ENCODE measurements at regions of chr19 and their contacts with region 1.

Region 1: GRCh38 chr19:55503502-55504251 is 15.4 kb downstream of the SSC5D start:
- DNase-seq: peak; percentile 80
- ATAC-seq: peak; percentile 99
- H3K4me3 ChIP-seq: peak overlapping the region; percentile 43; the same call in 1 of the 2 replicates
- H3K27ac ChIP-seq: peak overlapping the region; percentile 80
- H3K4me1 ChIP-seq: peaks cover 5% of the 10 kb centered on the region
- H3K27me3 ChIP-seq: no peaks in the 10 kb centered on the region
- CTCF ChIP-seq: peak; percentile 94 to 99 (median 95)
- EP300 ChIP-seq: no peak
- POLR2A ChIP-seq: peak; percentile 50; the same call in 1 of the 2 replicates
- RAD21 ChIP-seq: peak; percentile 90

Region 2: DNA sequence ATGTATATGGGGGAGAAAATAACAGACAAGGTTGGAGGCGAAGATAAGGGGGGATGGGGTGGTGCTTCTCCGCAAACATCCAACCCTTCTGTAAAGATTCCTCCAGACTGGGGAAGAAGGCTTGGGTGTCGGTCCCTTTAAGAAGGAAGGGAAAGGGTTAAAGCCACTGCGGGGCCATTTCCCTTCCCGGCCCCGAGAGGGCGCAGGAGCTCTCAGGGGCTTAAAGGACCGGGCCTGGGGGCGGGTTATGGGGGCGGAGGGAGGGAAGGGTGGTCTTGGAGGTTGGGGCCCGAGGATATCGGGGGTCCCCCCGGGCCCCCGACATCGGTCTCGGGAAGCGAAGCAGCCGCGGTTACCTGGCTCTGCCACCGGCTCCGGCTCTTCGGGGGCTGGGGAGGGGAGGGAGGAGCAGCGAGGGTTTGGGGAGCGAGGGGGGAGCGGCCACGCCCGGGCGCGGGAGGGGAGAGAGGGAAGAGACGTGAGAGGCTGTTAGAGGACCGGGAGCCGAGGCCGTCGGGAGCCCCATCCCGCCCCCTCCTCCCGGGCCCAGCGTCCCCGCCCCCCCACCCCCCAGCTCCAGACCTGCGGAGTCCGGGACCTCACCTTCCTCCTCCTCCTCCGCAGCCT is 357.5 kb before region 1 on chr19:
- CTCF ChIA-PET with region 1: interaction called, 17 read pairs
- POLR2A ChIA-PET with region 1: no interaction called
- RAD21 ChIA-PET with region 1: interaction called, 25 read pairs
- SMC1A ChIA-PET with region 1: no interaction called
- in situ Hi-C with region 1: no loop called
- intact Hi-C with region 1: loop called (anchors 2 kb)
- DNase-seq: no peak
- ATAC-seq: peak; percentile 68
- H3K4me3 ChIP-seq: no peak overlapping the region
- H3K27ac ChIP-seq: no peak overlapping the region
- H3K4me1 ChIP-seq: no peaks in the 10 kb centered on the region
- H3K27me3 ChIP-seq: no peaks in the 10 kb centered on the region; a peak in 2 of 4 replicates
- CTCF ChIP-seq: peak; percentile 37 to 70 (median 45)
- EP300 ChIP-seq: no peak
- POLR2A ChIP-seq: no peak
- RAD21 ChIP-seq: peak; percentile 38; the same call in 1 of the 2 replicates

Region 3: GRCh38 chr19:55301459-55302317 is 202.0 kb before region 1 on chr19:
- CTCF ChIA-PET with region 1: interaction called, 20 read pairs
- POLR2A ChIA-PET with region 1: no interaction called
- RAD21 ChIA-PET with region 1: interaction called, 9 read pairs
- SMC1A ChIA-PET with region 1: no interaction called
- in situ Hi-C with region 1: no loop called
- intact Hi-C with region 1: no loop called
- DNase-seq: peak; percentile 59
- ATAC-seq: peak; percentile 93
- H3K4me3 ChIP-seq: peak overlapping the region; percentile 67; the same call in 1 of the 2 replicates
- H3K27ac ChIP-seq: peak overlapping the region; percentile 27
- H3K4me1 ChIP-seq: peaks cover 11% of the 10 kb centered on the region
- H3K27me3 ChIP-seq: no peaks in the 10 kb centered on the region
- CTCF ChIP-seq: peak; percentile 91 to 97 (median 95)
- EP300 ChIP-seq: no peak
- POLR2A ChIP-seq: peak; percentile 37; the same call in 1 of the 2 replicates
- RAD21 ChIP-seq: peak; percentile 49

Region 4: DNA sequence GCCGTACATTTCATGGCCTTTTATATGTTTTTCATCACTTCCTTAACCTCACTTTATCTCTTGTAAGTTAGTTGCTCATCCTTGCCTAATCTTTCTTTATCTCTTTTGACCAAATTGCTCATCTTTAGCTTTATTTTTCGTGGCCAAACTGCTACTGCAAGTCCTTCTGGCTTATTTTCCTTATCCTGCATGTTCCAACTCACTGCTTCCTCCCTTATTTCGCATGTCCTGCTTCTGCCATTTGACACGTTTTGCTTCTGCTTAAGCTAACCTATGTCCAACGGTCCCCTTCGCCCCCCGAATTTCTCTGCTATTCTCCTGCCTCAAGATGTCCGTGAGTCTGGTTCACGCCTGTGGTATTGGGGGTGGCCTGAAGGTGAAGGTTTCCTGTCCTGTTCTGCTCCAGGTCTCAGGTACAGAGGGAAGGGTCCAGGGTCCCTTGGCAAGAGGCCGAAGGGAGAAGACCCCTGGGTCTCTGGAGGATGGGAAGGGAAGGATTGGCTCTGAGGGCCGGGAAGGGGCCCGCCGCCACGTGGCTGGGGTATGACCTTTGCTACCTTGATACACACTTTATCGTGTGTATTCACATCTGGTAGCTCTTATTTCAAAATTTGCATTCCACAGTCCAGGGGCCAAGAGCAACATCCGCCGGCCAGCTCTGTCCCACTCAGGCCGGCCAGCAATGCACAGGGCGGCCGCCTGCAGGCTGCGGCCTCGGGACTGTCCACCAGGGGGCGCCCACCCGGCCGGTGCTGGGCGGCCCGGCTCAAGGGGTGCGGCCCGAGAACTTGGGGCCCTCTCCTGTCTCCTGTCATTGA is 36.2 kb before region 1 on chr19:
- CTCF ChIA-PET with region 1: interaction called, 88 read pairs
- POLR2A ChIA-PET with region 1: no interaction called
- RAD21 ChIA-PET with region 1: interaction called, 34 read pairs
- SMC1A ChIA-PET with region 1: interaction called, 19 read pairs
- in situ Hi-C with region 1: no loop called
- intact Hi-C with region 1: loop called (anchors 1 kb)
- DNase-seq: no peak
- ATAC-seq: peak; percentile 99
- H3K4me3 ChIP-seq: no peak overlapping the region
- H3K27ac ChIP-seq: no peak overlapping the region
- H3K4me1 ChIP-seq: no peaks in the 10 kb centered on the region
- H3K27me3 ChIP-seq: no peaks in the 10 kb centered on the region
- CTCF ChIP-seq: peak; percentile 84 to 94 (median 91)
- EP300 ChIP-seq: no peak
- POLR2A ChIP-seq: no peak
- RAD21 ChIP-seq: peak; percentile 63

Region 5: DNA sequence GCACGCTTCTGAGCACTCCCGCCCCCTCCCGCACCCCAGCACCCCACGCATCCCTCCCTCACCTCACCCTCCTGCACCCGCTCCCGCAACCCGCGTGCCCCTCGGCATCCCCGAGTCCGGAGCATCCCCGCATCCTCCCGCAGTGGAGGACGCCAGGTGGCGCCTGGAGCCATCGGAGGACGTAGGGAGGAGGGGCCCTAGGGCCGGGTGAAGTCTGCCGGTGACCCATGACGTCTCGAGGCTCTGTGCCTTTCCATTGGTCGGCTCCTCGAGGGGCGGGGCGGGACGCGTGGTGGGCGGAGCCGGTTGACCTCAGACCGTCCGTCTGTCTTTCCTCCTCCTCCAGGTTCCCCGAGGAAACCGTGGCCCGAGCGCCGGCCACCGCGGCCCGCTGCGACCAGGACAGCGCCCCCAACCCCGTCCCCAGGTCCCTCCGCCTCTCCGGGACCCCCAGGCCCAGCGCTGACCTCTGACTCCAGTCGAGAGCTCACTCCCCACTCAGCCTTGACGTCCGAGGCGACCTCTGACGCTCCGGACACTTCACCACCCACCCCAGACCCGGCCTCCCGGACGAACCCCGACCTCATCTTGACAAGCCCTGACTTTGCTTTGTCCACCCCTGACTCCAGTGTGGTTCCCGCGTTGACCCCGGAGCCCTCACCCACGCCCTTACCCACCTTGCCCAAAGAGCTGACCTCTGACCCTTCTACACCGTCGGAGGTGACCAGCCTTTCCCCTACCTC is 13.4 kb after region 1 on chr19:
- CTCF ChIA-PET with region 1: interaction called, 45 read pairs
- POLR2A ChIA-PET with region 1: no interaction called
- RAD21 ChIA-PET with region 1: no interaction called
- SMC1A ChIA-PET with region 1: interaction called, 4 read pairs
- in situ Hi-C with region 1: no loop called
- intact Hi-C with region 1: no loop called
- DNase-seq: peak; percentile 66
- ATAC-seq: peak; percentile 100
- H3K4me3 ChIP-seq: peak overlapping the region; percentile 66; the same call in 1 of the 2 replicates
- H3K27ac ChIP-seq: peak overlapping the region; percentile 62
- H3K4me1 ChIP-seq: 0 out of 2 replicates have a peak, but pooled peaks cover 4% of the 10 kb centered on the region
- H3K27me3 ChIP-seq: no peaks in the 10 kb centered on the region
- CTCF ChIP-seq: peak; percentile 80 to 97 (median 96); a peak in 5 of 6 replicates
- EP300 ChIP-seq: peak in 1 of 2 experiments; percentile 16; a peak in 1 of 4 replicates
- POLR2A ChIP-seq: peak; percentile 53; the same call in 1 of the 2 replicates
- RAD21 ChIP-seq: peak; percentile 96

Region 6: GRCh38 chr19:55624109-55625003 is 120.7 kb after region 1 on chr19 and contains the start of gene ZNF784:
- CTCF ChIA-PET with region 1: interaction called, 13 read pairs
- POLR2A ChIA-PET with region 1: interaction called, 3 read pairs
- RAD21 ChIA-PET with region 1: interaction called, 8 read pairs
- SMC1A ChIA-PET with region 1: interaction called, 3 read pairs
- in situ Hi-C with region 1: no loop called
- intact Hi-C with region 1: no loop called
- DNase-seq: no peak
- ATAC-seq: peak; percentile 86
- H3K4me3 ChIP-seq: peak within 1 kb of the TSS; percentile 72; the same call in 1 of the 2 replicates
- H3K27ac ChIP-seq: peak within 1 kb of the TSS; percentile 66
- H3K4me1 ChIP-seq: peaks cover 9% of the 10 kb centered on the region; the same call in 1 of the 2 replicates
- H3K27me3 ChIP-seq: no peaks in the 10 kb centered on the region
- CTCF ChIP-seq: no peak
- EP300 ChIP-seq: no peak
- POLR2A ChIP-seq: peak; percentile 91
- RAD21 ChIP-seq: no peak
- polyA plus RNA-seq, gene ZNF784: 0.10 to 0.97 TPM

Region 7: GRCh38 chr19:55640577-55641425 is 137.1 kb after region 1 on chr19 and contains the start of gene ZNF580:
- CTCF ChIA-PET with region 1: no interaction called
- POLR2A ChIA-PET with region 1: no interaction called
- RAD21 ChIA-PET with region 1: no interaction called
- SMC1A ChIA-PET with region 1: no interaction called
- in situ Hi-C with region 1: no loop called
- intact Hi-C with region 1: no loop called
- DNase-seq: no peak
- ATAC-seq: peak; percentile 48
- H3K4me3 ChIP-seq: peak within 1 kb of the TSS; percentile 95
- H3K27ac ChIP-seq: peak within 1 kb of the TSS; percentile 64
- H3K4me1 ChIP-seq: peaks cover 43% of the 10 kb centered on the region
- H3K27me3 ChIP-seq: no peaks in the 10 kb centered on the region
- CTCF ChIP-seq: no peak
- EP300 ChIP-seq: no peak
- POLR2A ChIP-seq: peak; percentile 65; the same call in 1 of the 2 replicates
- RAD21 ChIP-seq: no peak
- polyA plus RNA-seq, gene ZNF580: 2.3 to 7.4 TPM